HepG2 (cell line): ENCODE measurements at regions of chr14 and their contacts with region 1.

Region 1: DNA sequence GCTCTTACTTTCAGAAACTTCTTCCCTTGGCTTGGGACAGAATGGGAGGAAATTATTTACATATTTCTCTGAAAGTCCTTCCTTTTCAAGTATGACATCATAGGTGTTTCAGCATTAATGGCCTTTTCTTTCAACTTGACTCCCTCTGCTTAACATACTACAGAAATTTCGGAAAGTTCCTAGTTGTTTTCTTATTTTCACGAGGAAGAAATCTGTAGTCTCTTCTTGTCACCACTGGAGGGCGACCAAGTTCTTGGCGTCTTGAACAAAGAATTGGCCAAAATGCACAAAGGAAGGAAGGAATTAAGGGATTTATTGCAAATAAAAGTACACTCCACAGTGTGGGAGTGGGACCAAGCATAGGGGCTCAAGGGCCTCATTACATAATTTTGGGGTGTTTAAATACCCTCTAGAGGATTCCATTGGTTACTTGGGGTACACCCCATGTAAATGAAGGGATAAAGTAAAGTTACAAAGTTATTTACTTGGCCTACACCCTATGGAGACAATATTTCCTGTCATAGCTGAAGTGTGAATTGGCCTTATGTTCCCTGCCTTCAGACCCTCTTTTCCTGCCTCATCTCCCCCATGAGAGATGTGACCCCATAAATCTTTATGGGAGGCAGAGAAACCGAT is 70.4 kb downstream of the RPL10L start:
- DNase-seq: peak; percentile 16
- ATAC-seq: no peak
- H3K4me3 ChIP-seq: no peak overlapping the region
- H3K27ac ChIP-seq: no peak overlapping the region
- H3K4me1 ChIP-seq: no peaks in the 10 kb centered on the region
- H3K27me3 ChIP-seq: no peaks in the 10 kb centered on the region
- CTCF ChIP-seq: peak; percentile 63
- EP300 ChIP-seq: no peak
- POLR2A ChIP-seq: no peak
- RAD21 ChIP-seq: peak; percentile 16; the same call in 1 of the 2 replicates

Region 2: GRCh38 chr14:46540986-46541385 is 40.2 kb before region 1 on chr14:
- CTCF ChIA-PET with region 1: no interaction called
- POLR2A ChIA-PET with region 1: no interaction called
- in situ Hi-C with region 1: no loop called
- intact Hi-C with region 1: no loop called
- DNase-seq: no peak
- ATAC-seq: no peak
- H3K4me3 ChIP-seq: no peak overlapping the region
- H3K27ac ChIP-seq: no peak overlapping the region
- H3K4me1 ChIP-seq: no peaks in the 10 kb centered on the region
- H3K27me3 ChIP-seq: no peaks in the 10 kb centered on the region
- CTCF ChIP-seq: no peak
- EP300 ChIP-seq: no peak
- POLR2A ChIP-seq: no peak
- RAD21 ChIP-seq: no peak

Region 3: GRCh38 chr14:46626876-46627275 is 45.7 kb after region 1 on chr14:
- CTCF ChIA-PET with region 1: no interaction called
- POLR2A ChIA-PET with region 1: no interaction called
- in situ Hi-C with region 1: no loop called
- intact Hi-C with region 1: no loop called
- DNase-seq: no peak
- ATAC-seq: no peak
- H3K4me3 ChIP-seq: no peak overlapping the region
- H3K27ac ChIP-seq: no peak overlapping the region
- H3K4me1 ChIP-seq: no peaks in the 10 kb centered on the region
- H3K27me3 ChIP-seq: no peaks in the 10 kb centered on the region
- CTCF ChIP-seq: no peak
- EP300 ChIP-seq: no peak
- POLR2A ChIP-seq: no peak
- RAD21 ChIP-seq: no peak

Region 4: DNA sequence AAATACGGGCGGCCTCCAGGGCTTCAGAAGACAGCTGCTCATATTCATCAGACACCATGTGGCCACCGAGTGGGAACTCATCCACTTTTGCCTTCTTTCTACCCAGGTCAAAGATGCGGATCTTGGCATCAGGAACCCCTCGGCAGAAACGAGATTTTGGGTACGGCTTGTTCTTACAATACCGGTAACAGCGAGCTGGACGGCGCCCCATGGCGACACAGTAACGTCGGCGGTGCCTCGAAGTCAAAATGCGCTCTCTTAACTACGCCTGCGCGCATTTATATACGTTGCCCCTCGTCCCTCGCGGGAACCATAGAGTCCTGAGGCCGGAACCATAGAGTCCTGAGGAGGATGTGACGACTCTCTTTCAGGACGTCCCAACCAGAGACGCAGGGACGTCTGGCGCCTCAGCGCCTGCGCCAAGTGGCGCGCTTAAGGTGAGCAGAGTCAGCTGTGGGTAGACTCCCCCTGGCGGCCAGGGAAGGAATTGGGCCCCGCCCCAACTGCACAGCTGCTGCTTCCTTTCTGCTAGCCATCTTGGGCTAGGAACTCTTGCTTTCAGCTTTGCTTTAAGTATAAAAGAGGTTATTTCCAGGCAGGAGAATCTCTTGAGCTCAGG is 70.5 kb after region 1 on chr14 and contains the start of gene RPL10L:
- CTCF ChIA-PET with region 1: no interaction called
- POLR2A ChIA-PET with region 1: no interaction called
- in situ Hi-C with region 1: no loop called
- intact Hi-C with region 1: loop called (anchors 5 kb)
- DNase-seq: no peak
- ATAC-seq: no peak
- H3K4me3 ChIP-seq: no peak within 1 kb of the TSS
- H3K27ac ChIP-seq: no peak within 1 kb of the TSS
- H3K4me1 ChIP-seq: no peaks in the 10 kb centered on the region
- H3K27me3 ChIP-seq: no peaks in the 10 kb centered on the region
- CTCF ChIP-seq: peak; percentile 33
- EP300 ChIP-seq: no peak
- POLR2A ChIP-seq: no peak
- RAD21 ChIP-seq: no peak
- total RNA-seq, gene RPL10L: not detected in 2 replicates

Region 5: GRCh38 chr14:46734281-46734680 is 153.1 kb after region 1 on chr14:
- CTCF ChIA-PET with region 1: no interaction called
- POLR2A ChIA-PET with region 1: no interaction called
- in situ Hi-C with region 1: no loop called
- intact Hi-C with region 1: no loop called
- DNase-seq: no peak
- ATAC-seq: no peak
- H3K4me3 ChIP-seq: no peak overlapping the region
- H3K27ac ChIP-seq: no peak overlapping the region
- H3K4me1 ChIP-seq: no peaks in the 10 kb centered on the region
- H3K27me3 ChIP-seq: no peaks in the 10 kb centered on the region
- CTCF ChIP-seq: no peak
- EP300 ChIP-seq: no peak
- POLR2A ChIP-seq: no peak
- RAD21 ChIP-seq: no peak

Region 6: DNA sequence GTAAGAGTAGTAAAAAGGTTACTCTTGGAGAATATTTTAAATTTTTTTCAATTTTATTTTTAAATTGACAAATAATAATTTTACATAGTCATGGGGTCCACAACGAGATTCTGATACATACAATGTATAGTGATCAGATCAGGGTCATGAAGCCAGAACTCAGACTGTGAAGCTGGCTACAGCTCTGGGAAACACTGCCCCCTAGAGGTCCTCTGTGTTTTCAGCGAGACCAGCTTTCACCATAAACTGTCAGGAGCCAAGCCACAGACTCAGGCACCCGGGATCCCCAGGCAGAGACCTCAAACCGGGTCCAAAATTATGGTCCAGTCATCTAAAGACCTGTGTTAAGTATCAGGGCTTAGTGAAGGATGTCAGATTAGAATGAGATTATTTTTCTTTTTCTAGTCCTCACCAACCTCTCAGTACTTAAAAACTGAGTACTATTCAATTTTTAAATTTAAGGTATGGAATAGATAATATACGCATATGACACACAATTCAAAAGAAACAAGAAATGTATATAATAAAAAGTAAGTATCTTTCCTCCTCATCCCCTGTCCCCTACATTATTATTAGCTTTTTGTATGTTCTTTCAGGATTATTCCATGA is 697.2 kb after region 1 on chr14:
- CTCF ChIA-PET with region 1: interaction called, 6 read pairs
- POLR2A ChIA-PET with region 1: no interaction called
- in situ Hi-C with region 1: no loop called
- intact Hi-C with region 1: loop called (anchors 1 kb)
- DNase-seq: peak; percentile 11
- ATAC-seq: peak; percentile 86
- H3K4me3 ChIP-seq: no peak overlapping the region
- H3K27ac ChIP-seq: no peak overlapping the region
- H3K4me1 ChIP-seq: no peaks in the 10 kb centered on the region
- H3K27me3 ChIP-seq: no peaks in the 10 kb centered on the region
- CTCF ChIP-seq: peak; percentile 70
- EP300 ChIP-seq: no peak
- POLR2A ChIP-seq: no peak
- RAD21 ChIP-seq: no peak